OCI-LY7 (cell line): ENCODE measurements at regions of chr1 and their contacts with region 1.

Region 1: DNA sequence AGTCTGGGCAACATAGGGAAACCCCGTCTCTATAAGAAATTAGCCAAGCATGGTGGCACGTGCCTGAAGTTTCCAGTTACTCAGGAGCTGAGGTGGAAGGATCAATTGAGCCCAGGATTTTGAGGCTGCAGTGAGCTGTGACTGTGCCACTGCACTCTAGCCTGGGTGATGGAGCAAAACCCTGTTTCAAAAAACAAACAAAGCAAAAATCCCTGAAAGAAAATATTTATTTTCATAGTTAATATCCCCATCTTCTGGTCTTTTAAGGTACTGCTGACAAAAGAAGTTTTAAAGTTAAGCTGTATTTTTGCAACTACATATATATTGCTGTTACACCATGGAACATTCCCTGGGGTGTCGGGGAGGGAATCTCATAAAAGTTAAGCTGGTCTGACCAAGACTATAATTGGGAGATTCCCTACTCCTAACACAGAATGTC is 26.0 kb downstream of the VAMP4 start:
- DNase-seq: peak; percentile 13
- H3K4me3 ChIP-seq: no peak overlapping the region
- H3K27ac ChIP-seq: no peak overlapping the region
- H3K4me1 ChIP-seq: no peaks in the 10 kb centered on the region
- CTCF ChIP-seq: peak; percentile 75

Region 2: DNA sequence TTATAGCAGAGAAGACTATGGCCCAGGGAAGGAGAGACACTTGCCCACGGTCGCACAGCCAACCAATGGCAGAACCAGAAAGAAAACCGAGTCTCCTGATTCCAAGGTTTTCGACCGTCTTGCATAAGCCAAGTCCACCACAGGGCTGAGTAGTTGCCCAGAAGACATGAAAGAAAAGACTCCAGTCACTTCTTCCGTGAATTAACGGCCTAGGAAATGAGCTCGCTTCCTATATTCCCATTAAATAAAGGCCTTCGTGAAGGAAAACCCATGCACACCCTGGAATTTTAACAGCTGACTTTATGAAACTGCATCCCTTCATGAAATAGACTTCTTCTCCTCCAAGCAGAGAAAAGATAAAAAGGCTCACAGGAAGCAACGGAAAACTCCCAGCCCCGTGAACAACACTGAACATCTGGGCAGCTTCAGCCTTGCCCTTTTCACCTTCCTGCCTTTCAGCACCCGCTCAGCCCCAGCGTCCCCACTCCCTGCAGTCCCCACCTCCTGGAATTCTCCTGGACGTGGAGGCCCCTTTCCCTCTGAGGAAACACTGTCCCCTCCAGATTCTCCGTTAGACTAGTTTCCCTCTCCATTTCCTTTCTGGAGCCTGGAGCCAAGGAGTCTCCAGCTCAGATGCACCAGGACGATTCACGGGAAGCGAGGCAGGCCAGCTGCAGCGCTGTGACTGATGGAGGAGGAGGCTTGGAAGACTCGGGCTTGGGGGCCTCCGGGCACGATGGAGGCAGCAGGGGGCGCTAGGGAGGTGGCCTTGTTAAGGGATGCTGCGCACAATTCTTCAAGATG is 60.7 kb before region 1 on chr1:
- CTCF ChIA-PET with region 1: no interaction called
- POLR2A ChIA-PET with region 1: interaction called, 3 read pairs
- intact Hi-C with region 1: loop called (anchors 10 kb)
- DNase-seq: peak; percentile 48
- H3K4me3 ChIP-seq: no peak overlapping the region
- H3K27ac ChIP-seq: no peak overlapping the region
- H3K4me1 ChIP-seq: no peaks in the 10 kb centered on the region
- CTCF ChIP-seq: peak; percentile 86

Region 3: GRCh38 chr1:171730052-171730451 is 14.2 kb after region 1 on chr1:
- CTCF ChIA-PET with region 1: no interaction called
- POLR2A ChIA-PET with region 1: interaction called, 12 read pairs
- intact Hi-C with region 1: no loop called
- DNase-seq: no peak
- H3K4me3 ChIP-seq: no peak overlapping the region
- H3K27ac ChIP-seq: no peak overlapping the region
- H3K4me1 ChIP-seq: no peaks in the 10 kb centered on the region
- CTCF ChIP-seq: no peak